ENCODE measurements at regions of chr16 and their contacts with region 1.

Region 1: DNA sequence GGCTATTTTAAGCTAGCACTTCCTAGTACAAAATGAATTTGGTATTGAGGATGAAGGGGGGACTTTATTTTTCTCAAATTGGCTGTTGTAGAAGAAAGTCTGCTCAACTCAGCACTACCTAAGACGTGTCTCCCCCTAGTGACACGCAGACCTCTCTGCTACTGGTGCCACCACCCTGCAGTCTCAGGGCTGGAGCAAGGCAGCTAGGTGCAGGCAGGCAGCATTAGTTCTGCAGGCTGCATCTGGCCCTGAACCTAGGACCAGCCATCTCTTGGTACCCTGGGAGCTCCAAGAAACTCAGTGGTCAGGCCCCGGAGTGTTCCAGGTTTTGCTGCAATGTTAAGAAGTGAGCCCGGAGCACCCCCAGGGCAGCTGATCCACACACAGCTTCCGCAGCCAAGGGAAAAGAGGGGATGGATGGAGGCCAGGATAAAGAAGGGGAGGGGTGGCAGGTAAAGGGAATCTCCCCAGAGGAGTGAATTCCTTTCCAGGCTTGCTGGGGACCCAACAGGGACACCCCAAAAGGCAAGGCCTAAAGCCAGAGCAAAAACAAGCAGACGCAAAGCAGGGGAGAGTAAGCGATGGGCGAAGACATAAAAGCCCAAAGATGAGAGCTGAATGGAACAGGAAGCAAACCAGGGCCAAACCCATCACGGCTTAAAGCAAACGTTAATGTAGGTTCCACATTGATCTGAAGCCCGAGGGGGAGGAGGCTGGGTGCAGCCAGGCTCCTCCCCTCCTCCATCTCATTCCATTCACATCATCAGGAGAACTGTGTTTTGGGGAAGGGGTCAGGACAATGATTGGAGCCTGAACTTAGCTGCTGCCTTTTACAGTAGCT is 200.5 kb downstream of the ZFHX3 start:
- DNase-seq: no peak
- ATAC-seq: peak; percentile 34
- H3K4me3 Mint-ChIP-seq: no peak overlapping the region
- H3K27ac Mint-ChIP-seq: no peak overlapping the region
- H3K4me1 Mint-ChIP-seq: peaks cover 18% of the 10 kb centered on the region
- H3K27me3 Mint-ChIP-seq: peaks cover 20% of the 10 kb centered on the region
- CTCF ChIP-seq: no peak

Region 2: GRCh38 chr16:72858665-72859493 is 11.5 kb after region 1 on chr16:
- CTCF ChIA-PET with region 1: no interaction called
- POLR2A ChIA-PET with region 1: no interaction called
- intact Hi-C with region 1: no loop called
- DNase-seq: no peak
- ATAC-seq: no peak
- H3K4me3 Mint-ChIP-seq: no peak overlapping the region
- H3K27ac Mint-ChIP-seq: no peak overlapping the region
- H3K4me1 Mint-ChIP-seq: peaks cover 6% of the 10 kb centered on the region
- H3K27me3 Mint-ChIP-seq: no peaks in the 10 kb centered on the region
- CTCF ChIP-seq: no peak

Region 3: DNA sequence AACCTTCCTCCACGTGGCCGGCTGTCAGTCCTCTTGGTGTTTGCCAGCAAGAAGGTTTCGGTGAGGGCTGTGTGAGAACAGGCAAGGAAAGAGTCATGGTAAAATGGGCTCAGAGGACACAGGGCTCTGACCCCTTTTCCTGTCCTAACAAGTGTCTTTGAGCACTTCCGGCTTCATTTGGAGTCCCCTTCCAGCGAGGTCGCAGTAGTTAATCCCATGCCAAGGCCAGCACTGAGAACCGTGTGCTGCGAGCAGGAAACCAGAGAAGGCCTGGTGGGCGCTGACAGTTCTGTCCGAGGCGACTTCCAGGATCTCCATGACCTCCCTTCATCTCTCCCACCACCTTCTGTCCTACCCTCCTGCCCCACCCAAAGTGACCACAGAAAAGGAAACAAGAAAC is 32.4 kb after region 1 on chr16:
- CTCF ChIA-PET with region 1: interaction called, 3 read pairs
- POLR2A ChIA-PET with region 1: no interaction called
- intact Hi-C with region 1: loop called (anchors 2 kb)
- DNase-seq: no peak
- ATAC-seq: no peak
- H3K4me3 Mint-ChIP-seq: no peak overlapping the region
- H3K27ac Mint-ChIP-seq: no peak overlapping the region
- H3K4me1 Mint-ChIP-seq: peaks cover 5% of the 10 kb centered on the region
- H3K27me3 Mint-ChIP-seq: no peaks in the 10 kb centered on the region
- CTCF ChIP-seq: no peak

Measured in activated B cell treated with CpG ODN at 0.5 μM for 24 hours (primary cell).